K562 (cell line): ENCODE measurements at regions of chr5 and their contacts with region 1.

Region 1: GRCh38 chr5:87780831-87781760 is 368.4 kb upstream of the CCNH start:
- DNase-seq: peak; percentile 45 to 87 (median 55)
- ATAC-seq: peak; percentile 100
- H3K4me3 ChIP-seq: no peak overlapping the region
- H3K27ac ChIP-seq: no peak overlapping the region
- H3K4me1 ChIP-seq: no peaks in the 10 kb centered on the region
- H3K27me3 ChIP-seq: no peaks in the 10 kb centered on the region
- CTCF ChIP-seq: peak; percentile 85 to 90 (median 87)
- EP300 ChIP-seq: no peak
- POLR2A ChIP-seq: no peak
- RAD21 ChIP-seq: peak; percentile 88 to 93

Region 2: DNA sequence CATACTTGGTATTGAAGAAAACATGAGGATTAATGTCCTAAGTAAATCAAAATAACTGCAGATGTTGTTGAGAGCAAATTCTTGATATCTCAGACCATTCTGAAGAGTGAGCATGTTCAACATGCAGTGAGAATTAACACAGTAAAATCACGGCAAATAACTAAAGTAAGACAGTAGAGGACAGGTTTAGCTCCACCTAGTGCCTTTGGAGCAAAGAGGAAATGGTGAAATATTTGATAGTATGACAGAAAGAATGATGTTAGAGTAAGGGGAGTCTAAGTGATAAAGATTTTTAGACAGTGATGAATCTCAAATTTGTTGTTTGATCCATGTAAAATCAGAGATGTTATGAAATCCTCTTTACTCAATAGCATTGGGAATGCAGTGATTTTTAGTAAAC is 63.4 kb after region 1 on chr5:
- CTCF ChIA-PET with region 1: no interaction called
- POLR2A ChIA-PET with region 1: no interaction called
- in situ Hi-C with region 1: no loop called
- intact Hi-C with region 1: no loop called
- DNase-seq: no peak
- ATAC-seq: no peak
- H3K4me3 ChIP-seq: no peak overlapping the region
- H3K27ac ChIP-seq: no peak overlapping the region
- H3K4me1 ChIP-seq: no peaks in the 10 kb centered on the region
- H3K27me3 ChIP-seq: no peaks in the 10 kb centered on the region
- CTCF ChIP-seq: no peak
- EP300 ChIP-seq: no peak
- POLR2A ChIP-seq: no peak
- RAD21 ChIP-seq: no peak

Region 3: GRCh38 chr5:88438011-88438410 is 656.9 kb after region 1 on chr5:
- CTCF ChIA-PET with region 1: no interaction called
- POLR2A ChIA-PET with region 1: no interaction called
- in situ Hi-C with region 1: no loop called
- intact Hi-C with region 1: loop called (anchors 5 kb)
- DNase-seq: no peak
- ATAC-seq: no peak
- H3K4me3 ChIP-seq: no peak overlapping the region
- H3K27ac ChIP-seq: no peak overlapping the region
- H3K4me1 ChIP-seq: no peaks in the 10 kb centered on the region
- H3K27me3 ChIP-seq: no peaks in the 10 kb centered on the region
- CTCF ChIP-seq: no peak
- EP300 ChIP-seq: no peak
- POLR2A ChIP-seq: no peak
- RAD21 ChIP-seq: no peak

Region 4: DNA sequence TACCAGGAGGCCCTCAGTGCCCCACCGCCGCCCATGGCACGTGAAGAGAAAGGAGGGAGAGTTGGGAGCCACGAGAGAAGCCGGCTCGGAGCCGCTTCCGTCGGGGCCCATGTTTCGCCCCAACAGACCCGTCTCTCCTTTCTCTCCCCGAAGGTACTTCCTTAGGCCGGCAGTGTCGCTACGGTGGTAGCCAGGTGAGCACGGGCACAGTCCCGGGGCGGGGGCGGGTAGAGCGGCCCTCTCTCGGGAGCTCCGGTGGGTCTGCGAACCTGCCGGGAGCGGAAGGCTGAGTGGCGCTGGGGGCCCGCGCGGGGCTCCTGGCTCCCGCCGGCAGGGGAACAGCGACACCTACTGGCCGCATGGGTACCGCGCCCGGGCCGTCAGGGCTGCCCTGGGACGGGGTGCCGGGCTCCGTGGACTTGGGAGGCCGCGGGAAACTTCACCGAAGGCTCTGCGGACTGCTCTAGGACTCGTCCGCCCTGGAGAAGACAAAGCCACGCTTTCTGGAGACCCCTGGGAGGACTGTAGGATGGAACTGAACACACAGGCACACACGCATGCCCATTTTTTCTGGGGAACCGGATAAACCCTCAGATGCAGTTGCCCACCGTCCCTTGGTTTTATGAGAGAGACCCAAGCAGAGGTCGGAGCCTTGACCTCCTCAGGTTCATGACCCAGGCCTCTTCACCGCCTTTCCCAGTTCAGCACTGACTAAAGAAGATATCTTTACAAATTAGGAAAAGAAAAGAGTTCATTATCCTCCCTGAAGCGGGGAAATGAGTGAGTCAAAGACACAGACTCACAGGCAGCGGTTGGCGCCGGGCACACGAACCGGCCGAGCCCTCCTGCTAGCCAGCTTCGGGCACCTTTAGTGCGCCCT is 899.4 kb after region 1 on chr5:
- CTCF ChIA-PET with region 1: interaction called, 6 read pairs
- POLR2A ChIA-PET with region 1: no interaction called
- in situ Hi-C with region 1: no loop called
- intact Hi-C with region 1: loop called (anchors 1 kb)
- DNase-seq: peak; percentile 75 to 90 (median 86)
- ATAC-seq: peak; percentile 98
- H3K4me3 ChIP-seq: peak overlapping the region; percentile 35
- H3K27ac ChIP-seq: no peak overlapping the region
- H3K4me1 ChIP-seq: peaks cover 0 to 26% of the 10 kb centered on the region in 2 experiments; a peak in 3 of 5 replicates
- H3K27me3 ChIP-seq: peaks cover 30 to 49% of the 10 kb centered on the region in 2 experiments; a peak in 4 of 5 replicates
- CTCF ChIP-seq: peak; percentile 78 to 90 (median 83)
- EP300 ChIP-seq: no peak
- POLR2A ChIP-seq: no peak
- RAD21 ChIP-seq: peak; percentile 90 to 93

Region 5: DNA sequence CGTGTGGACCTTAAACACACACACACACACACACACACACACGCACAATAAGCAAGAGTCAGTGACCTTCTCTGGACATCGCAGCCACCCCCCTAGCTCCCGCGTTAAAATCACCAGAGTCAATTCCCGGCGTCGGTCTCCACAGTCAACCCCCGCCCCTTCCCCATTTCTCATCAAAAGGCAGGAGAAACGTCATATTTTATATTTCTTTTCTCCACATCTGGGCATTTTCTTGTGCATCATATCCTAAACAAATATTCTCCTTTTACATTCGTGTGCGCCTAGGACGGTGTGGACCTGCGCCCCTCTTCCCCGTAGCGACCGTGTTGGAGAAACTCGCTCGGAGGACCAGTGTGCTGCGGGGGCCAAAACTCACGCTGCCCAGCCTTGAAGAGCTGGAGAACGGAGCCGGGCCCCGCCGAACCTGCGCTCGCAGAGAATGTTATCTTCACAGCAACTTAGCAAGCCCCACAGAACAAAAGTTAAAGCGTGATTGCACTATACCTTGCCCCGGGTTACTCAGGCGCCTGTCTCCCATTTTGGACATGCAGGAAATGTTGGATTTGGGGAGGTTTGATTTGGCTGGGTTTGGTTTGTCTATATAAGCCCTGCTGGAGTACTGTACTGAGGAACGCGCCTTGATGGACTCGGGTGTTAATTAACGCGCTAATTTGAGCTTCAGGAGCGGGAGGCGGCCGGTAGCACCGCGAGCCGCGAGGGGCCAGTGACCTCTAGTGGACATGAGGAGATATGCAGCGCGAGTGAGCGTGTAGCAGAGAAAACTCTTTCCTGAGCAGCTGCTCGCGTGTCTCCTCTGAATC is 909.5 kb after region 1 on chr5:
- CTCF ChIA-PET with region 1: interaction called, 6 read pairs
- POLR2A ChIA-PET with region 1: interaction called, 3 read pairs
- in situ Hi-C with region 1: loop called (anchors 5 kb)
- intact Hi-C with region 1: loop called (anchors 2 kb)
- DNase-seq: peak; percentile 73 to 79 (median 75)
- ATAC-seq: peak; percentile 93
- H3K4me3 ChIP-seq: no peak overlapping the region
- H3K27ac ChIP-seq: no peak overlapping the region
- H3K4me1 ChIP-seq: peaks cover 0 to 14% of the 10 kb centered on the region in 2 experiments; a peak in 2 of 5 replicates
- H3K27me3 ChIP-seq: peaks cover 51 to 69% of the 10 kb centered on the region in 2 experiments
- CTCF ChIP-seq: peak; percentile 86 to 94 (median 92)
- EP300 ChIP-seq: no peak
- POLR2A ChIP-seq: no peak
- RAD21 ChIP-seq: peak; percentile 86 to 91